ENCODE measurements at regions of chr5 and their contacts with region 1.

Region 1: DNA sequence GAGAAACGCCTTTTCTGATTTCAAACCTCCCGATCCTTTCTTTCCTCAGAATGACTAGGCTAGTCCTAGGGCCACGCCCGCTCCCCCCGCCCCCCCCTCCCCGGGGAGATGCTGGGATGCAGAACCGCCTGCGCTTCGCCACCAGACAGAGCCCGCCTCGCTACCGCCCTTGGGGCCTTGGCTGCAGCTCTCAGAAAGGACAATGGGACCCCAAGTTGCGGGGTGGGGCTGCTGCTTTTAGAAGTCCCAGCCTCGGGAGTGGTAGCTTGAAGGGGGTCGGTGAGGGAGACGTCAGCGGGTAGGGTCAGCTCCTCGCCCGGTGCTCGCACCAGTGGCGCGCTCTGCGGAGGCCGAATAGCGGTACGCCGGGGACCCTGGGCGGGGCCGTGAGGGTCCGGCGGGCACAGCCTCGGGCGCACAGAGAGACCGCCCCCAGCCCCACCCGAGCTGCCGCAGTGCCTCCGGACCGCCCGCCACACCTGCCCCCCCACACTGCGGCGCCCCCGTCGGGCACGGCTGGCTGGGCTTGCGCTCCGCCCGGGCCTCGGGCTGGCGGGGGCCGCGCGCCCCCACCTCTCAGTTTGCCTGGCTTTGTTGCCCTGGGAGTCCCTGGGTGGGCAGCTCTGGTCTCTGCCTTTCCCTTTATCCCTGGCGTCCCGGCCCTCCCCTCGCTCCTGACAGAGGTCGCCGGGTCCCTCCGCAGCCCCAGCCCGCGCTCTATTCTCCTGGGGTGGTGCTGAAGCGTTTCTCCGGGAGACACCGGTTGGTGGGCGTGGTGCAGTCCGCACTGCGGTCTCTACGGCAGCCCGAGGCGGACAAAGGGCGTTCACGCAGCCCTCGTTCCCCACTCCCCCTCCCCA is 1.2 kb downstream of the MAP1B start:
- DNase-seq: peak; percentile 78 to 88 (median 84)
- ATAC-seq: peak; percentile 79
- H3K4me3 ChIP-seq: peak overlapping the region; percentile 66
- H3K27ac ChIP-seq: peak overlapping the region; percentile 86
- H3K4me1 ChIP-seq: peaks cover 18 to 30% of the 10 kb centered on the region in 2 experiments
- H3K27me3 ChIP-seq: no peaks in the 10 kb centered on the region
- CTCF ChIP-seq: no peak
- EP300 ChIP-seq: no peak
- POLR2A ChIP-seq: peak; percentile 49; the same call in 1 of the 2 replicates
- RAD21 ChIP-seq: no peak

Region 2: GRCh38 chr5:72030237-72030636 is 78.2 kb before region 1 on chr5:
- CTCF ChIA-PET with region 1: no interaction called
- POLR2A ChIA-PET with region 1: no interaction called
- in situ Hi-C with region 1: no loop called
- intact Hi-C with region 1: no loop called
- DNase-seq: no peak
- ATAC-seq: no peak
- H3K4me3 ChIP-seq: no peak overlapping the region
- H3K27ac ChIP-seq: no peak overlapping the region
- H3K4me1 ChIP-seq: no peaks in the 10 kb centered on the region
- H3K27me3 ChIP-seq: peaks cover 0 to 10% of the 10 kb centered on the region in 2 experiments; a peak in 2 of 5 replicates
- CTCF ChIP-seq: no peak
- EP300 ChIP-seq: no peak
- POLR2A ChIP-seq: no peak
- RAD21 ChIP-seq: no peak

Region 3: GRCh38 chr5:72125941-72126620 is 17.6 kb after region 1 on chr5:
- CTCF ChIA-PET with region 1: no interaction called
- POLR2A ChIA-PET with region 1: interaction called, 21 read pairs
- in situ Hi-C with region 1: no loop called
- intact Hi-C with region 1: no loop called
- DNase-seq: no peak
- ATAC-seq: no peak; the same call in 2 of the 3 replicates
- H3K4me3 ChIP-seq: no peak overlapping the region
- H3K27ac ChIP-seq: no peak overlapping the region
- H3K4me1 ChIP-seq: peaks cover 0 to 3% of the 10 kb centered on the region in 2 experiments; a peak in 1 of 5 replicates
- H3K27me3 ChIP-seq: no peaks in the 10 kb centered on the region
- CTCF ChIP-seq: no peak
- EP300 ChIP-seq: no peak
- POLR2A ChIP-seq: no peak
- RAD21 ChIP-seq: no peak

Measured in K562 (cell line).